ENCODE measurements at regions of chr1 and their contacts with region 1.

Region 1: DNA sequence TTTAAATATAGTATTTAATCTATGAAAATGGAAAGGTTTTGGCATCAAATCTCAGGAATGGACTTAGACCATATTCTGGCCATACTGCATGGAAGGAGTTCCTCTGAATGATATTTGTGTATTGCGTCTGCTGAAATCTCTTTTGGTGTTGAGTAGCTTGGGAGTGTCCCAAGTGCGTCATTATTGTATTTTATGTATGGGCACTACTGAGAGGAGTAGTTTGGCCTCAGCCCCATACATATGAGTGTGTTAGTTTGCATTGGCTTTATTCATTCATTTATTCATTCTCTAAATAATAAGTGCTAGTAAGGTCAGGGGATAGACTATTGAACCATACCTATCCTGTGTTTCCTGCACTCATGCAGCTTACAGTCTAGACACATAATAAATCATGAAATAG is 46.6 kb downstream of the CENPF start:
- DNase-seq: no peak
- ATAC-seq: no peak
- H3K4me3 ChIP-seq: no peak overlapping the region
- H3K27ac ChIP-seq: no peak overlapping the region
- H3K4me1 ChIP-seq: no peaks in the 10 kb centered on the region
- H3K27me3 ChIP-seq: no peaks in the 10 kb centered on the region
- CTCF ChIP-seq: no peak

Region 2: DNA sequence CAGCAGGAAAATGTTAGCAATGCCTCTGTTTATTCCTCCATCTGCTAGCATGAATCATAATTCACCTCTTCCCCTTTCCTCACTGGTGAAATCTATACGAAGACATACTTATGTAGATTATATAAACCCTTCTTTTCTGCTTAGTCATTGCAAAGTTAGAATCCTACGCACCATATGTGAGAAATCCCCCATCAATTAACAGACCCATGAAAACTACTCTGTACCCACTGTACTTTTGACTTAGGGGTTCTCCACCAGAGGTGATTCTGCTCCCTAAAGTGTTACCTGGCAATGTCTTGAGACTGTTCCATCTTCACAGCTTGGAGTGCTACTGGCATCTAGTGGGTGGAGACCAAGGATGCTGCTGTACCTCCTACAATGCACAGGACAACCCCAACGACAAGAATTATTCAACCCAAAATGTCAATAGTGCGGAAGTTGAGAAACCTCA is 867.9 kb after region 1 on chr1:
- intact Hi-C with region 1: loop called in 1 of 10 experiments (anchors 5 kb)
- DNase-seq: no peak
- ATAC-seq: no peak
- H3K4me3 ChIP-seq: no peak overlapping the region
- H3K27ac ChIP-seq: no peak overlapping the region
- H3K4me1 ChIP-seq: no peaks in the 10 kb centered on the region
- H3K27me3 ChIP-seq: no peaks in the 10 kb centered on the region
- CTCF ChIP-seq: peak in 4 of 9 donors; percentile 6 to 27 (median 21)

Region 3: GRCh38 chr1:216390956-216391355 is 1741.3 kb after region 1 on chr1:
- intact Hi-C with region 1: loop called in 1 of 10 experiments (anchors 5 kb)
- DNase-seq: no peak
- ATAC-seq: no peak
- H3K4me3 ChIP-seq: no peak overlapping the region
- H3K27ac ChIP-seq: no peak overlapping the region
- H3K4me1 ChIP-seq: no peaks in the 10 kb centered on the region
- H3K27me3 ChIP-seq: no peaks in the 10 kb centered on the region
- CTCF ChIP-seq: no peak